GM10248 (cell line): ENCODE measurements at regions of chr6 and their contacts with region 1.

Region 1: DNA sequence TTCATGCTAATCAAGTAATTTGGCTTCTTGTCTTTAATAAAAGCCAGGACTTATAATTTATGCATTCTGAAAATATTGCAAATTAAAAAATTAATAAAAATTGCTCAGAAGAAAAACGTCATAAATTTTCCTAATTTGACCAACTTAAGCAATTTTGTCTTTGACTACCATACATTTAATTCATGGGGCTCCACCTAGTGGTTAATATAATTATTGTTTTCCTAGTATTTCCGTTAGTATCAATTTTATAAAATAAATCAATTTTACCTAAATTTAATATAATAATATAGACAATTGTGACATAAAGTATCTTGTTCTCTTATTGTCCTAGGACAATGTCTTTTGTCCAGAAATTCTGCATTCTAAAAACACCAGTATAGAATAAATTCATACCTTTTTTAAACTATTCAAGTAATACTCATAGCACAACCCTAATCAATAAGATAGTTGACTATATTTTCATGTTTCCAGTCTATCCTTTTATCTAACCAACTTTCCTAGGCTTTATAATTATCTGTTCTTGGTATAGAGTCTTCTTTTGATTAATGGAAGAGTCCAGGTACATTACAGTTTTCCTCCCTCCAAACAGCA is 319.9 kb downstream of the TRDN start:
- DNase-seq: no peak
- CTCF ChIP-seq: peak; percentile 30

Region 2: GRCh38 chr6:122869437-122870024 is 447.3 kb before region 1 on chr6:
- CTCF ChIA-PET with region 1: interaction called, 47 read pairs
- POLR2A ChIA-PET with region 1: no interaction called
- DNase-seq: peak; percentile 38
- CTCF ChIP-seq: peak; percentile 55